ENCODE measurements at regions of chr1 and their contacts with region 1.

Region 1: GRCh38 chr1:202565890-202566602 is 144.2 kb downstream of the SYT2 start:
- DNase-seq: no peak
- ATAC-seq: peak in 3 of 8 donors; percentile 16 to 26 (median 26)
- H3K4me3 ChIP-seq: no peak overlapping the region
- H3K27ac ChIP-seq: peak overlapping the region in 9 of 10 donors; percentile 4 to 60 (median 33)
- H3K4me1 ChIP-seq: peaks cover 7 to 85% (median 54%) of the 10 kb centered on the region in 9 donors
- H3K27me3 ChIP-seq: no peaks in the 10 kb centered on the region
- CTCF ChIP-seq: no peak

Region 2: DNA sequence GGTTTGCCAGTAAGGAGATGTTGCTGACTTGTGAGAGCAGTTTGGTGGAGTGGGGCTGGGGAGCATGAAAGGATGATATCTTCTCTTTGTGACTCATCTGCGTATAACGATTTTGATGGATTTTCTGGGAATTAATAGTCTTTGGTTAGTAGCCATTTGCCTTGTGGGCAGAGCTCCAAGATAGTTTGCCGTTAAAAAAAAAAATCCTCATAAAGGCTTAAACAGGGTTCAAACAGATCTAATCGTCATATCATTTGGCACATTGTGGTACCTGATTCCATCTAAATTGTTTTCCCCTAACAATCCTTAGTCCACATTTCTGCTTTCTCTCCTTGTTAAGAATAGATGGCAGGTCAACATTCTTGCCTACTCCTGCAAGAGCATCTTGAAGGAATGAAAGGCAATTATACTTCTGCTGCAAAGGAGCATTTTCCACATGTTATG is 49.6 kb before region 1 on chr1:
- intact Hi-C with region 1: loop called in 2 of 10 experiments (anchors 5 to 10 kb)
- DNase-seq: no peak
- ATAC-seq: no peak
- H3K4me3 ChIP-seq: no peak overlapping the region
- H3K27ac ChIP-seq: peak overlapping the region in 1 of 10 donors; percentile 23
- H3K4me1 ChIP-seq: peaks cover 5 to 52% (median 22%) of the 10 kb centered on the region in 9 donors
- H3K27me3 ChIP-seq: no peaks in the 10 kb centered on the region
- CTCF ChIP-seq: no peak

Region 3: GRCh38 chr1:202615501-202616354 is 49.7 kb after region 1 on chr1:
- intact Hi-C with region 1: no loop called
- DNase-seq: peak; percentile 36 to 49
- ATAC-seq: peak; percentile 68 to 90 (median 81)
- H3K4me3 ChIP-seq: no peak overlapping the region
- H3K27ac ChIP-seq: peak overlapping the region; percentile 7 to 86 (median 72)
- H3K4me1 ChIP-seq: peaks cover 9 to 55% (median 37%) of the 10 kb centered on the region in 9 donors
- H3K27me3 ChIP-seq: peaks cover 0 to 86% (median 0%) of the 10 kb centered on the region in 7 donors
- CTCF ChIP-seq: no peak